IMR-90 (cell line): ENCODE measurements at regions of chr11 and their contacts with region 1.

Region 1: DNA sequence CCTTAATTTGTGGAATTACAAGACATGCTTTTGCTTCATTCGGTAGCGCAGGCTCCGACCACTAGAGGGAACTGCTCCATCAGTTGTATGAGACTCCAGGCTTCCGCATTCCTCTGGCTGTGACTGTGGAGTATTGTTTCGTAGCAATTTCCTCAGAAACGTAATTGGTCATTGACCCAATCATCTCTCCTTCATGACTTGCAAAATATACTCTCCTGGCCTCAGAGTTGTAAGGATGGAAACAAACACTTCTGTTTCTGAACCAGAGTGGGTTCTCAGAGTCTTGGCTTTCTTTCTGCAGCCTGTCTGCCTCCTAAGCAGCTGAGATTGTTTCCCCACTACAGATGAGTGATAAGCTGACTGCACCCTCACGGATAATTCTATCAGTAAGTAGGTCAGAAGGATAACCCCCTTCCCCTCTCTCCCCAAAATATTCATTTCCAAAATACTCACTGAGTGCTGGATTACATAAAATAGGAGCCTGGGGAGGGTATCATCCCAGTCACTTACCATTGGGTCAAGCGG is 146.8 kb upstream of the ZC3H12C start:
- DNase-seq: peak; percentile 97
- ATAC-seq: peak; percentile 99
- H3K4me3 ChIP-seq: peak overlapping the region; percentile 32; the same call in 1 of the 2 replicates
- H3K27ac ChIP-seq: peak overlapping the region; percentile 86; the same call in 1 of the 2 replicates
- H3K4me1 ChIP-seq: peaks cover 3% of the 10 kb centered on the region
- H3K27me3 ChIP-seq: no peaks in the 10 kb centered on the region
- CTCF ChIP-seq: peak; percentile 97
- POLR2A ChIP-seq: peak; percentile 83
- RAD21 ChIP-seq: peak; percentile 97

Region 2: DNA sequence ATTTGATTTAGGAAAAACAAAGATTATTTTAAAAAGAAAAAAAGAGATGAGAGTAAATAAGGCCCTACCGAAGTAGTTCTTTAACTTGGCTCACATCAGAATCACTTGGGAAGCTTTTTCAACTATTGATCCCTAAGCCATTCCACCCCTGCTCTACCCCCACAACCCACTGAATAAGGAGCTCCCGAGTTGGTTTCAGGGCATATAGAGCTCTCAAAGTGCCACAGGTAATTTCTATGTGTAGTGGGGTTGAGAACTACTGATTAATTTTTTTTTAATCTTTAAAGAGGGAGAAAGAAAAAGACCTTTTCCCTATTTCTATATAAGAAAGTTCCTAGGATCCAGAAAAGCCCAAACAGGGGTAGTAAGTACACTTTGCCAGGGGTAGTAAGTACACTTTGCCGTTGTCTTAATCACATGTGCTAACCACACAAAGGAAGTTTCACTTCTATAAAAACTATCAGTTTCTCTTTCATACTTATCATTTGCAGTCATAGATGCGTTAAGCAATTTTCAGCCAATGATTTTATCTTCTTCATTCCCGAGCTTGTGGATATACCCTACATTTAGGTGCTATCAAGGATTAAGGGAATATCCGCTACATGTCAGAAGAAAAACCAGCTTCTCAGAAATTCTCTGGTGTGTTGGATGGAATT is 38.4 kb after region 1 on chr11:
- CTCF ChIA-PET with region 1: no interaction called
- POLR2A ChIA-PET with region 1: no interaction called
- dilution Hi-C with region 1: no loop called
- in situ Hi-C with region 1: no loop called
- intact Hi-C with region 1: no loop called
- DNase-seq: no peak
- ATAC-seq: no peak
- H3K4me3 ChIP-seq: no peak overlapping the region
- H3K27ac ChIP-seq: no peak overlapping the region
- H3K4me1 ChIP-seq: no peaks in the 10 kb centered on the region
- H3K27me3 ChIP-seq: no peaks in the 10 kb centered on the region
- CTCF ChIP-seq: no peak
- POLR2A ChIP-seq: no peak
- RAD21 ChIP-seq: no peak

Region 3: DNA sequence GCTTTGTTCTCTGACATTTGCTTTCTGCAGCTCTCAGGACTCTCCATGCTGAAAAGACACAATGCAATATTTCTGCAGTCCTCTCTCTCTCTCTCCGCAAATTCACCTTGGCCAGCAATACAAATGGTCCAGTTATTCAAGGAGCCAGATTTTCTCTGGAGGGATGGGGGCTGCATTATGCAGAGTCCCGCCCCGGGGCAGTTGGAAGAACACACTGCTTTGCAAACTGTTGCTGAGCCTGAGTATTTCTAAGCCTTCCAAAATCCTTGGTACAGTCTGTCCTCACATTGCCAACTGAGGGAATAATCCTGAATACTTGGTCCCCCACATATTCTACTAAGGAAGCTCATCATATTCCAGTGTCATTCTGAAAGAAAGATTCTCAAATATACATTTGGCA is 52.5 kb after region 1 on chr11:
- CTCF ChIA-PET with region 1: no interaction called
- POLR2A ChIA-PET with region 1: no interaction called
- dilution Hi-C with region 1: no loop called
- in situ Hi-C with region 1: no loop called
- intact Hi-C with region 1: loop called (anchors 2 kb)
- DNase-seq: no peak
- ATAC-seq: no peak
- H3K4me3 ChIP-seq: no peak overlapping the region
- H3K27ac ChIP-seq: no peak overlapping the region
- H3K4me1 ChIP-seq: peaks cover 3% of the 10 kb centered on the region
- H3K27me3 ChIP-seq: 0 out of 2 replicates have a peak, but pooled peaks cover 1% of the 10 kb centered on the region
- CTCF ChIP-seq: no peak
- POLR2A ChIP-seq: no peak
- RAD21 ChIP-seq: no peak

Region 4: GRCh38 chr11:110092515-110093404 is 146.4 kb after region 1 on chr11 and contains the start of gene ZC3H12C:
- CTCF ChIA-PET with region 1: no interaction called
- POLR2A ChIA-PET with region 1: no interaction called
- dilution Hi-C with region 1: no loop called
- in situ Hi-C with region 1: loop called (anchors 5 kb)
- intact Hi-C with region 1: loop called (anchors 1 kb)
- DNase-seq: peak; percentile 90
- ATAC-seq: peak; percentile 88
- H3K4me3 ChIP-seq: peak within 1 kb of the TSS; percentile 76
- H3K27ac ChIP-seq: peak within 1 kb of the TSS; percentile 92
- H3K4me1 ChIP-seq: peaks cover 7% of the 10 kb centered on the region
- H3K27me3 ChIP-seq: no peaks in the 10 kb centered on the region
- CTCF ChIP-seq: peak; percentile 81
- POLR2A ChIP-seq: peak; percentile 80
- RAD21 ChIP-seq: peak; percentile 58
- total RNA-seq, gene ZC3H12C: 14.2 and 15.8 TPM in 2 replicates

Region 5: DNA sequence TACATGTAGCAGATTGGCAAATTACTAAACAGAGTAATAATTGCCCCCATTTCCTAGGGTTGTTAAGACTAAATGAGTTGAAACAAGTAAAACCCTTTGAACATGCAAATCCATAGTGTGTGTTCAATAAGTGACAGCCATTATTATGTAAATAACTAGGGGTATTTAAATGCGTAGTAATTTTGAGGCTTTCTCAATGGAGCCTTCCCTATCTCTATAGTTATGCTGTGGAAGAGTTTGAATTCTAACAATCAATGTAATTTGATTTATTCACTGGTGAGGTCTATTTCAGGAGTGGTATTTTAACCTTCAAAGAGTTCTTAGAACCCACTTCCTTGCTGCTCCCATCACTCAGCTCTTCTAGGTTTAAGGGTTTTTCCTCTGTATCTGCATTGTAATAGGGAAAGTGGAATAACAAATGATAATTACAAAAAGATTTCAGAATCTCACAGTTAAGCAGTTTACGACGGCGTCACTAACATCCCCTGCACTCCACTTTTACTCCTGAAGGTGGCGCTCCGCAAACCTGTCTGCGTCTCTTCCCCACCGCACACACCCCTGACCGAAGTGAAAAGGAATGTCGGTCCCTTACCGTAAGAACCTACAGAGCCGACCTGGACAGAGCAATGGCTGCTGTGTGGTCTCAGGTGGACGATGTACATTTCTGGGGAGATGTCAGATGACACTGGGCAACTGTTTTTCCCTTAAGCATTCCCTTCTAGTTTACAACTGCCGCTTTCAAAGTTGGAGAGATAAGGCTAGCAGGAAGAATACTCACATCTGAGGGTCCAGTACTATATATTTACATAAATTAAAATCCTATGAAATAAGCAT is 227.6 kb after region 1 on chr11:
- CTCF ChIA-PET with region 1: no interaction called
- POLR2A ChIA-PET with region 1: no interaction called
- dilution Hi-C with region 1: no loop called
- in situ Hi-C with region 1: loop called (anchors 25 kb)
- intact Hi-C with region 1: loop called (anchors 1 kb)
- DNase-seq: peak; percentile 64
- ATAC-seq: peak; percentile 82
- H3K4me3 ChIP-seq: peak overlapping the region; percentile 12; the same call in 1 of the 2 replicates
- H3K27ac ChIP-seq: no peak overlapping the region
- H3K4me1 ChIP-seq: peaks cover 9% of the 10 kb centered on the region
- H3K27me3 ChIP-seq: no peaks in the 10 kb centered on the region
- CTCF ChIP-seq: peak; percentile 61
- POLR2A ChIP-seq: no peak
- RAD21 ChIP-seq: peak; percentile 42

Region 6: DNA sequence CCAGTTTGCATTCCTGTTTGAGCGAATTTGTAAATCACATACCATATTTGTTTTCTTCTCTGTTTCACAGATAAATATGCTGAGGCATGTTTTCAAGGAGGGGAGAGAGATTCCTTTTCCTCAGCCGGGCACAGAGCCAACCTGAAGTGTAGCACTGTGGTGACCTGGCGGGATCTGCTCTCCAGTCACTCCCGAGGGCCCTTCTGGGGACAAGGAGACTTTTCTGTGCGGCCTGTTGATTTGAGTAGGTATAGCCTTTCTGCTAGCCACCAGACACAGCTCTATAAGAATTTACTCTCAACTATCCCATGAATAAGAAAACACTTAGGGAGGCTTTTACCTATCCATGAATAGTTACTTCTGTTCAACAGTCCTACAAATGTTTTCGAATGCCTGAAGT is 419.9 kb after region 1 on chr11:
- CTCF ChIA-PET with region 1: no interaction called
- POLR2A ChIA-PET with region 1: no interaction called
- dilution Hi-C with region 1: no loop called
- in situ Hi-C with region 1: loop called (anchors 10 kb)
- intact Hi-C with region 1: loop called (anchors 2 kb)
- DNase-seq: peak; percentile 28
- ATAC-seq: peak; percentile 78
- H3K4me3 ChIP-seq: no peak overlapping the region
- H3K27ac ChIP-seq: no peak overlapping the region
- H3K4me1 ChIP-seq: peaks cover 4% of the 10 kb centered on the region
- H3K27me3 ChIP-seq: no peaks in the 10 kb centered on the region
- CTCF ChIP-seq: no peak
- POLR2A ChIP-seq: no peak
- RAD21 ChIP-seq: no peak

Region 7: DNA sequence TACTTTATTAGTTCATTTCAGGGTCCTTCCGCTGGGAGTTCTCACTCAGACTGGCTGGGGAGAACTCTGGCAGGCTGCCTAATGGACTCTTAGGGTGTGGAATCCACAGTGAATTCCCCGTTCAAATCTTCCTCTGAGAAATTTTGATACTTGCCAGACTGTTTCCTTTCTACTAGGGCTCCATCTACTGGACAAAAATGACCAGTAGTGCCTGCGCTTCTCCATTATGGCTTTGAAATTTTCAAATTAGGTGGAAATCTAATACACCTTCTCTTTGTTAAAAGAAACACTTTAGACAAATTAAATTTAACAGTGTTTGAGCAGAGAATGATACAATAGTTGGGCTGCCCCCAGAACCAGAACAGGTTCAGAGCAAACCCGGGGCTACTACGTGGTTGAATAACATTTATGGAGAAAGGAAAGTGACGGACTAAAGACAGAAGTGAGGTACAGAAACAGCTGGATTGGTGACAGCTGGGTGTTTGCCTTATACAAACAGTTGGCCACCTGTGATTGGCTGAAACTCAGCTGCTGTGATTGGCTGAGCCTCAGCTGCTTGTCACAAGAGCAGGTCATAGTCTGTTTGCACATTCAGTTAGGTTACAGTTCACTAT is 430.4 kb after region 1 on chr11:
- CTCF ChIA-PET with region 1: no interaction called
- POLR2A ChIA-PET with region 1: no interaction called
- dilution Hi-C with region 1: no loop called
- in situ Hi-C with region 1: loop called (anchors 10 kb)
- intact Hi-C with region 1: loop called (anchors 1 kb)
- DNase-seq: peak; percentile 79
- ATAC-seq: peak; percentile 84
- H3K4me3 ChIP-seq: no peak overlapping the region
- H3K27ac ChIP-seq: no peak overlapping the region
- H3K4me1 ChIP-seq: peaks cover 6% of the 10 kb centered on the region
- H3K27me3 ChIP-seq: no peaks in the 10 kb centered on the region
- CTCF ChIP-seq: peak; percentile 83
- POLR2A ChIP-seq: no peak
- RAD21 ChIP-seq: peak; percentile 79

Region 8: DNA sequence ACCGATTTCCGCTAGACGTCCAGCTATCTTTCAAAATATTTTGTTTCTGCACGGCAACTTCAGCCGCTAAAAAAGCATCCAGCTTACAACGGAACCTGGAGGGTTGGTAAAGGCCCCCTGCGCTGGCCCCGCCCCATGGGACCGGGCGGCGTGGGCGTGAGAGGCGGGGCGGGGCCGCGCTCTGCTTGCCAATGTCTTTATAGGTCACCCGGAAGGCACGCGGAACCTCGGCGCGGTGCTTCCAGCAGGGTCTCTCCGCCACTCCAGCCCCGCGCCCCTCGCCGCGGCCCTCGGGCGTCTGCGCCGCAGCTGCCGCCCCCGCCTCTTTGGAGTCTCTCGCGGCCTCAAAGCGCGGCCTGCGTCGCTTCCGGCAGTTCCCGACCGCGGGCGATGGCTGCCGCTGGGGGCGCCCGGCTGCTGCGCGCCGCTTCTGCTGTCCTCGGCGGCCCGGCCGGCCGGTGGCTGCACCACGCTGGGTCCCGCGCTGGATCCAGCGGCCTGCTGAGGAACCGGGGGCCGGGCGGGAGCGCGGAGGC is 483.4 kb after region 1 on chr11 and contains the start of gene FDX1:
- CTCF ChIA-PET with region 1: interaction called, 3 read pairs
- POLR2A ChIA-PET with region 1: no interaction called
- dilution Hi-C with region 1: no loop called
- in situ Hi-C with region 1: no loop called
- intact Hi-C with region 1: loop called (anchors 2 kb)
- DNase-seq: peak; percentile 74
- ATAC-seq: peak; percentile 86
- H3K4me3 ChIP-seq: peak within 1 kb of the TSS; percentile 86
- H3K27ac ChIP-seq: peak within 1 kb of the TSS; percentile 92
- H3K4me1 ChIP-seq: peaks cover 9% of the 10 kb centered on the region
- H3K27me3 ChIP-seq: no peaks in the 10 kb centered on the region
- CTCF ChIP-seq: peak; percentile 65
- POLR2A ChIP-seq: peak; percentile 82
- RAD21 ChIP-seq: peak; percentile 38
- total RNA-seq, gene FDX1: 4.3 and 10.6 TPM in 2 replicates